ENCODE measurements at regions of chr7 and their contacts with region 1.

Region 1: GRCh38 chr7:43799589-43799988 is 41.1 kb downstream of the BLVRA start:
- DNase-seq: peak in 1 of 3 donors; percentile 12
- H3K4me3 ChIP-seq: no peak overlapping the region
- H3K4me3 Mint-ChIP-seq: no peak overlapping the region
- H3K27ac ChIP-seq: no peak overlapping the region
- H3K27ac Mint-ChIP-seq: no peak overlapping the region
- H3K4me1 ChIP-seq: no peaks in the 10 kb centered on the region
- H3K4me1 Mint-ChIP-seq: no peaks in the 10 kb centered on the region
- H3K27me3 ChIP-seq: no peaks in the 10 kb centered on the region
- H3K27me3 Mint-ChIP-seq: peaks cover 0 to 3% (median 2%) of the 10 kb centered on the region in 3 donors
- CTCF ChIP-seq: peak; percentile 30

Region 2: DNA sequence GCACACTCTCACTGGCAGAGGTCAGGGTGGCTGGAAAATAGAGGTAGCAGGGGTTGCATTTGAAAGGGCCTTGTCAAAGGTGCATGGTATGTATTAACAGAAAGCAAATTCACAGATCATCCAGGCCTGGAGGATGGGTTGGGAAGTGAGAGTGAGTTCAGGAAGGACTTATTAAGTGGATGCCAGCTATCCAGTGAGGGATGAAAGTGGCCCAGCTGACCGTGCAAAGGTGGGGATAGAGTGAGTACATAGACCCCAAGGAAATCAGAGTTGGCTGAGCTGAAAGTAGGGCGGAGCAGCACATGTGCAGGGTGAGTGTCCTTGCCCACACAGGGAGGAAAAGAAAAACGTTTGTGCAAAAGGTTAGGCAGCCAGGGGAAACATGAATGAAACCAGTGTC is 629.0 kb before region 1 on chr7:
- intact Hi-C with region 1: no loop called
- DNase-seq: no peak
- H3K4me3 ChIP-seq: no peak overlapping the region
- H3K4me3 Mint-ChIP-seq: no peak overlapping the region
- H3K27ac ChIP-seq: no peak overlapping the region
- H3K27ac Mint-ChIP-seq: no peak overlapping the region
- H3K4me1 ChIP-seq: peaks cover under 1 to 1% of the 10 kb centered on the region in 2 donors
- H3K4me1 Mint-ChIP-seq: peaks cover under 1% of the 10 kb centered on the region
- H3K27me3 ChIP-seq: no peaks in the 10 kb centered on the region
- H3K27me3 Mint-ChIP-seq: peaks cover 0 to 12% (median 7%) of the 10 kb centered on the region in 3 donors
- CTCF ChIP-seq: no peak

Region 3: DNA sequence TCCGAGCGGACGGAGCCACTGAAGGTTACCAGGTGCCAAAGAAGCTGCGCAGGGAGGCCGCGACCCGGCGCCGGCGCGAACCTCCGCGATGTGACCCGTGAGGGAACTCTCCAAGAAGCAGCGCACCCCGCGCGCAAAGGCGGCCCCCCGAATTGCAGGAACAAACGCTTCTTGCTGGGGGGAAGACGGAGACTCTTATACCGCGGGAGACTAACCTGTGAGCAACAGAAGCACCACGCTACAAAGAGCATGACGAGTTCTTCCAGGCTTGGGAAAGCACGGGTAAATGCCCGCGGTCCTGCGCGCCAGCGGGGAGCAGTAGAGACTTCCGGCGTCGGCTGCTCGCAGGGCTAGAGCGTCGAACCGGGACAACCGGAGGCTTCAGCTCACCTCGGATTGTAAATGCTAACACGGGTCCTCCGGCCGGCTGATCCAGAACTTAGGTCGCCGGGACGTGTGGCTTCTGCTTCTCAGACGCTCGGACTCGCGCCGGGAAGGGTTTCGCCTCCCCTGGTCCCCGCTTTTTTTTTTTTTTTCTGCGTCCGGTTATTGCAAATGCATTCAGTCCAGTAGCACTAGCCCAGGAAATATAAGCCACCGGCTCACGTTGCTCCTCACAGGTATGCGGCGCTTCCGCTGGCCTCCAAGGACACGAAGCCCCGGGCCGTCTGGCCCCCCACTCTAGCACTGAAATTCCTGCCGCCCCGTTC is 70.2 kb before region 1 on chr7 and contains the start of gene COA1:
- intact Hi-C with region 1: loop called in 1 of 2 experiments (anchors 10 kb)
- DNase-seq: peak; percentile 83 to 91 (median 84)
- H3K4me3 ChIP-seq: peak within 1 kb of the TSS; percentile 58 to 92 (median 64)
- H3K4me3 Mint-ChIP-seq: peak within 1 kb of the TSS; percentile 91 to 94
- H3K27ac ChIP-seq: peak within 1 kb of the TSS; percentile 41 to 89
- H3K27ac Mint-ChIP-seq: peak within 1 kb of the TSS; percentile 83 to 92 (median 89)
- H3K4me1 ChIP-seq: peaks cover 11 to 22% of the 10 kb centered on the region in 2 donors
- H3K4me1 Mint-ChIP-seq: peaks cover 35% of the 10 kb centered on the region
- H3K27me3 ChIP-seq: no peaks in the 10 kb centered on the region
- H3K27me3 Mint-ChIP-seq: peaks cover 0 to 3% (median 2%) of the 10 kb centered on the region in 3 donors
- CTCF ChIP-seq: no peak
- polyA plus RNA-seq, gene COA1: 25.6 to 57.8 (median 56.2) TPM

Region 4: DNA sequence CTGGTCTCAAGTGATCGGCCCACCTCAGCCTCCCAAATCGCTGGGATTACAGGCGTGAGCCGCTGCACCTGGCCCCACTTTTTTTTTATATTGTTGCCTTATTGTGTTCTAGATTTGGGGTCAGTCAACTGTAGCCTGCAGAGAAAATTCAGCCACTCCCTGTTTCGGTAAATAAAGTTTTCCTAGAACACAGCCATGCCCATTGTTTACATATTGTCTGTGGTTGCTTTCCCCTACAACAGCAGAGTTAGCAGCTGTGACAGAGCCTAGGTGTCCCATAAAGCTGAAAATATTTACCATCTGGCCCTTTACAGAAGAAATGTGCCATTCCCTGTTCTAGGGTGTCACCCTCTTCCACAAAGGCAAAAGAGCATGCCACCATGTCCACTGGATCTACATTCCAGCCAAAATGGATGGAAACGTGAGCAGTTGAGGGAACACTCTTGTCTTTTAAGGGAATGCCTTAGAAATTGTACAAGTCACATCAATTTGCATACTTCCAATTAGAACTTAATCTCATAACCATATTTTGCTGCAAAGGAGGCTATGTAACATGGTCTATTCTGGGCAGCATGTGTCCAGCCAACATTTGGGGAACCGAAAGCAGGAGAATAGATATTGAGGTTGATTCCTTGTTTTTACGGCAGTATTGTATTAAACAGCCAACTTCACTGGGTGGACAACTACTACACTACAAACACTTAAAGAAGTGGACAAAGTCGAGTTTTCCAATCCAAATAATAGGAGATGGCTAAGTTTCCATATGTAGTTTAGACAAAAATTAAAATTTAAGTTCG is 52.1 kb before region 1 on chr7:
- intact Hi-C with region 1: loop called in 1 of 2 experiments (anchors 10 kb)
- DNase-seq: peak; percentile 36 to 67 (median 53)
- H3K4me3 ChIP-seq: no peak overlapping the region
- H3K4me3 Mint-ChIP-seq: no peak overlapping the region
- H3K27ac ChIP-seq: peak overlapping the region in 1 of 2 donors; percentile 29
- H3K27ac Mint-ChIP-seq: peak overlapping the region in 3 of 7 donors; percentile 11 to 51 (median 47)
- H3K4me1 ChIP-seq: peaks cover 58 to 60% of the 10 kb centered on the region in 2 donors
- H3K4me1 Mint-ChIP-seq: peaks cover 59% of the 10 kb centered on the region
- H3K27me3 ChIP-seq: no peaks in the 10 kb centered on the region
- H3K27me3 Mint-ChIP-seq: no peaks in the 10 kb centered on the region
- CTCF ChIP-seq: no peak

Region 5: DNA sequence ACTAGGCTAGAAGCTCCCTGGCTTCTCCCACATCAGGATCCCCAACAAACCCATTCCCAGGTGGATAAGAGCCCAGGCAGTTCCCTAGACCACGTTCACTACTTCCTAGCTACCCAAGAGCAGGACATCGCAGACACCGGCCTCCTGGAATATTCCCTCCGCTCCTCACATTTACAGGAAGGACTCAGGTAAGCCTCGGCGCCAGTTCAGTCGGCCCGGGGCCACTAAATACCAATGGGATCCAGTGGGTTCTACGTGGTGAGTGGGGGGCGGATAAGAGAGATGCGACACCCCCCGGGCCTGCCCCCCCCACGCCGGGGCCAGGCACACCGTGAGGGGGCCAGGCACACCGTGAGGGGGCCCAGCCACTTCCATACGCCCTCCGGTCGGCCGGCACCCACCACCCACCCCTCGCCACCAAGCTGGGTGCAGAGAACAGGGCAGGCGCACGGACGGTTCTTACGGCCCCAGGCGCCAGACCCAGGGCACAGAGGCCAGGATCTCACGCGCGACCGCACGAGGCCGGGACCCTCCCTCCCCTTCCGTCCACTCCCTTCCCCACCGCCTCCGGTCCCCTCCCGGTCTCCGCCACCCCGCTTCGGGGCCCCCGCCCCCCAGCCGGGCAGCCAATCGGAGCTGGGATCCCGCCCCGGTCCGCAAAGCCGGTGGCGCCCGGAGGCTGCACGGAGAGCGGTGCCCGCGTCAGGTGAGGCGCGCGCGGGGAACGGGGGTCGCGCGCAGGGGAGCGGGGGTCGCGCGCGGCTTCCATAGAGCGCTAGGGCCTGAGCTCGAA is 41.4 kb before region 1 on chr7 and contains the start of gene BLVRA:
- intact Hi-C with region 1: no loop called
- DNase-seq: peak; percentile 46 to 68 (median 48)
- H3K4me3 ChIP-seq: peak within 1 kb of the TSS; percentile 59 to 98 (median 90)
- H3K4me3 Mint-ChIP-seq: peak within 1 kb of the TSS; percentile 83 to 94
- H3K27ac ChIP-seq: peak within 1 kb of the TSS; percentile 19 to 92
- H3K27ac Mint-ChIP-seq: peak within 1 kb of the TSS; percentile 18 to 90 (median 73)
- H3K4me1 ChIP-seq: peaks cover 78 to 91% of the 10 kb centered on the region in 2 donors
- H3K4me1 Mint-ChIP-seq: peaks cover 75% of the 10 kb centered on the region
- H3K27me3 ChIP-seq: no peaks in the 10 kb centered on the region
- H3K27me3 Mint-ChIP-seq: peaks cover 0 to 6% (median 2%) of the 10 kb centered on the region in 3 donors
- CTCF ChIP-seq: no peak
- polyA plus RNA-seq, gene BLVRA: 71.9 to 238 (median 199) TPM

Measured in CD14-positive monocyte (primary cell).